Prostate gland (tissue), 2 donors: ENCODE measurements at regions of chr6 and their contacts with region 1.

Region 1: DNA sequence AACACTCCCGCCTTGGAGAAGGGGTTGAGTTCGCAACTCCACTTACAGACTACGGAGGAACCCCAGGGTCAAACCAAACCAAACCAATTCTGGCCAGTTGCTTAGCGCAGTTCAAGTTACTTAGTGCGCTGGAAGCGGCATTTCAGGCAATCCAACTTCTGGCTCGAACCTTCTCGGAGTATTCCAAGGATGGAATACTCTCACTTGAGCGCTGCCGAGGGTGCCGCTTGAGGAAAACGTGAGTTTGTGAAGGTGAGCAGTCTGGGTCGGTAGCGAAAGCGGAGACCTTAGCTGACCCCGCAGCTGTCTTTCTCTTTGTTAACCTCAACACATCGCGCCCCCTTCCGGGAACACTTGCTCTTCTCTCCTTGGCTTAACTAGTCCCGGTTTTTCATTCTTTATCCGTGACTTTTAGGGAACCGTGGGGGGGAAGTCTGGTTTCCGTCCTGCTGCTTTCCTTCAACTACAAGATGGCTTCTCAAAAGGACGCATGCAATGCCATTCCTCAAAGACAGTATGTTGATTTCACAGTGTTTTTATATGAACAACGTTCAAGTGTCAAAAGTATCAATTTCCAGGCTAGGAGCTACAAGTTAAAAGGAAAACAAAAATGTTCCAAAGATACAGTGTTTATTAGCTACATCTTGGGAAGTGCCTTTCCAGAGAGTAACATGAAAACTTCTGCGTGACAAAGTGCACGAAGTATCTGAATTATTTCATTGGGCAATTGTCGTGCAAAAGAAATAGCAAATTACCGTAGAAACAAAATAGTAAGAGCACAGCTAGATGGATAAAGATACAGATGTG is 742 bp upstream of the PNISR start:
- DNase-seq: peak; percentile 70
- H3K4me3 ChIP-seq: peak overlapping the region; percentile 58 to 59
- H3K27ac ChIP-seq: peak overlapping the region; percentile 96 to 98
- H3K4me1 ChIP-seq: no peaks in the 10 kb centered on the region
- H3K27me3 ChIP-seq: no peaks in the 10 kb centered on the region
- CTCF ChIP-seq: peak in 3 of 4 experiments; percentile 36 to 45 (median 45)
- POLR2A ChIP-seq: no peak

Region 2: DNA sequence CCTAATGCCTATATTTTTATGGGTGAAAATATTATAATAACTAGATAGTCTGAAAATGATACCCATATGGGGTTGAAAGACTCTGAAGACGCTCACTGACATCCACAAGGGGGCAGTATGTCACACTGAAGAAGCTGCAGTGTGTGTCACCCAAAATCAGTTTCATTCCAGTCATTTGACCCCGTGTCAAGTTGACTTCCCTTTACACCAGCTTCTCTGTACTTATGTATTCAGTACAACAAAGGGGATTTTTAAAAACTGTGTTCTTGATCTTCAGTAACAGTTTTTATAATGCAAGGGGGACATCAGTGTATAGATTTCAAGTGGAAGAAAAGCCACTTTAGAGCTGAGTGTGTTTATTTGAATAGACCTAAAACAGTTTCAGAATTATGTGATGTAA is 95.7 kb before region 1 on chr6:
- intact Hi-C with region 1: loop called (anchors 5 kb)
- DNase-seq: peak; percentile 51
- H3K4me3 ChIP-seq: no peak overlapping the region
- H3K27ac ChIP-seq: no peak overlapping the region
- H3K4me1 ChIP-seq: no peaks in the 10 kb centered on the region
- H3K27me3 ChIP-seq: no peaks in the 10 kb centered on the region
- CTCF ChIP-seq: peak; percentile 29 to 56 (median 52)
- POLR2A ChIP-seq: no peak

Region 3: DNA sequence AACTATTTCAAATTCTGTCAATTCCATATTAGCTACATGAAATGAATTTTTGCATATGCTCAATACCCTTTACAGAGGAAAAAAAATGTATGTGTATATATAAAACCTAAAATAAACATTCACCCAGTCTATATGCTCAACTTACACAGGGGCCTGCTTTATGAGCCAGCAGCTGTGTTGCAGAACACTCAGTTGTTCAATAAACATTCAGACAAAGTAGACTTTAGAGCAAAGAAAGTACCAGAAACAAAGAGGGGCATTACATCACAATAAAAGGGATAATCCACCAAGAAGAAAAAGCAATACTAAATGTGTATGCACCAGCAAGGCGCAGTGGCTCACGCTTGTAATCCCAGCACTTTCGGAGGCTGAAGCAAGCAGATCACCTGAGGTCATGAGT is 41.3 kb before region 1 on chr6:
- intact Hi-C with region 1: no loop called
- DNase-seq: no peak
- H3K4me3 ChIP-seq: no peak overlapping the region
- H3K27ac ChIP-seq: no peak overlapping the region
- H3K4me1 ChIP-seq: peaks cover 2% of the 10 kb centered on the region
- H3K27me3 ChIP-seq: no peaks in the 10 kb centered on the region
- CTCF ChIP-seq: no peak
- POLR2A ChIP-seq: no peak

Region 4: DNA sequence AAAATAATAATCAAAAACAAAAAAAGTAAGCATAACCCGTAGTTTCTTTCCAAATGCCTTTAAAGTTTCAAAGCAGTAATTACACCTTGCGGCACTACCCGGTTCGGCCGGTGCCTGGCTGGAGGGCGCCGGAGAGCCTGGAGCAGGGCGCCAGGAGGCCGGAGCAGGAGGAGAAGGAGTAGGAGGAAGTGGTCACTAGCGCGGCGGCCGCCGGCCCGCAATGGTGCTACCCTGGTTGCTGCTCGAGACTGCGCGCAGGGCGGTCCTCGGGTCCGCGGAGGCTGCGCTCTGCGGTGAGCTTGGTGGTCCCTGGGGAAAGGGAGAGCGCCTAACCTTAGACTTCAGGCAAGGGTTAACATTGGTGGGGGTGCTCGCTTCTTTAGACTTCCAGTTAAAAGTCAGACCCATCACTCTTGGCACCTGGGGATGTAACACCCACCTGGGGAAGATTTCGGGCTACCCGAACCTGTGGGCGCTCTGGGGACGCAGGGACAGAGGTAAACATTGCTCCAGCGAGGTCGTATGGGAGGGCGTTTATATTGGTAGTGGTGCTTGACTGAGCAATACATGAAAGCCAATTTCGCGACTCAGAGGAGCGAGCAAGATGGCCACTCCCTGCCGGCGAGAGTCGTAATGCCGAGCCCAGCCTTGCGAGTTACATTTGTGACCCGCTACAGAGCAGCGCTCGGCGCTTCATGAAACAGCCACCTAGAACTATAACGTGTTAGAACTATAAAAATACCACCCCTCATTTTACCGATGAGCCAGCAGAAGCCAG is 95.2 kb after region 1 on chr6:
- intact Hi-C with region 1: loop called (anchors 5 kb)
- DNase-seq: peak; percentile 83
- H3K4me3 ChIP-seq: peak overlapping the region; percentile 56 to 76
- H3K27ac ChIP-seq: peak overlapping the region; percentile 87 to 89
- H3K4me1 ChIP-seq: no peaks in the 10 kb centered on the region
- H3K27me3 ChIP-seq: no peaks in the 10 kb centered on the region
- CTCF ChIP-seq: peak; percentile 58 to 89 (median 84)
- POLR2A ChIP-seq: peak; percentile 75

Region 5: GRCh38 chr6:99712519-99712918 is 286.7 kb after region 1 on chr6:
- intact Hi-C with region 1: no loop called
- DNase-seq: no peak
- H3K4me3 ChIP-seq: no peak overlapping the region
- H3K27ac ChIP-seq: no peak overlapping the region
- H3K4me1 ChIP-seq: no peaks in the 10 kb centered on the region
- H3K27me3 ChIP-seq: no peaks in the 10 kb centered on the region
- CTCF ChIP-seq: no peak
- POLR2A ChIP-seq: no peak